ENCODE measurements at regions of chr4 and their contacts with region 1.

Region 1: DNA sequence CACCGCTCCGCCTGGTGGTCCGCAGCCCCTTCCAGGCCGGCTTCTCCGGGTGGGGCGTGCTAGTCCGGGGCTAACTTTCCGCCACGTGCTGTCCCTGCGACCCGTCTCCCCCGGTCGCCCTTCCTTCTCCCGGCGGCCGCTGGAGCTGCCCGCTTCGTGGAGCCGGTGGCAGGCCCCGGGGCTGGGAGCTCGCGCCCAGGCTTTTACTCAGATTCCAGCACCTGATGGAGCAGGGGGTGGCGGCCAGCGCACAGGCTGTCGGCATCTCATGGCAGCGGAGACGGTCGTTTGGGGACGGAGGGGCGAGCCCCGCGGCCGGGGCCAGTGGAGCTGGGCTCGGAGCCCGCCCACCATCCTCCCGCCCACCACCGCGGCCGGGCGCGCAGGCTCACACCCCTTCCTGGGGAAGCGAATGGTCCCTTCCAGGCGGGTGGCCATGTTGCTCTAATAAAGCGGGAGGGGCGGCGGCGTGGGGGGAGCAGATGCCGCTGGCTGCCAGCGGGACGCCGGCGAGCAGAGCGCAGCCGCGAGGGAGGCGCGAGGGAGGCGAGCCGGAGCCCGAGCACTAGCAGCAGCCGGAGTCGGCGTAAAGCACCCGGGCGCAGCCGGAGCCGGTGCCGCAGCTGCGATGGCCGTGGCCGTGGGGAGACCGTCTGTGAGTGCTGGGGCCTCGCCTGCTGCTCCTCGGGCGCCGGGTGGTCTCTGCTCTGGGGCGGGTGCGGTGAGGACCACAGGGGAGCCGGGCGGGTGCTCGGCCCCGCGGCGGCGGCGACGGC is at the start of gene SEPTIN11:
- DNase-seq: peak; percentile 56
- H3K4me3 Mint-ChIP-seq: peak within 1 kb of the TSS; percentile 84
- H3K27ac Mint-ChIP-seq: peak within 1 kb of the TSS; percentile 68
- H3K4me1 Mint-ChIP-seq: peaks cover 14% of the 10 kb centered on the region
- H3K27me3 Mint-ChIP-seq: peaks cover 77% of the 10 kb centered on the region
- total RNA-seq, gene SEPTIN11: 22.4 and 23.6 TPM in 2 replicates

Region 2: GRCh38 chr4:76689241-76689817 is 260.1 kb before region 1 on chr4:
- intact Hi-C with region 1: loop called (anchors 10 kb)
- DNase-seq: no peak
- H3K4me3 Mint-ChIP-seq: peak overlapping the region; percentile 72
- H3K27ac Mint-ChIP-seq: no peak overlapping the region
- H3K4me1 Mint-ChIP-seq: peaks cover 27% of the 10 kb centered on the region
- H3K27me3 Mint-ChIP-seq: peaks cover 74% of the 10 kb centered on the region

Region 3: DNA sequence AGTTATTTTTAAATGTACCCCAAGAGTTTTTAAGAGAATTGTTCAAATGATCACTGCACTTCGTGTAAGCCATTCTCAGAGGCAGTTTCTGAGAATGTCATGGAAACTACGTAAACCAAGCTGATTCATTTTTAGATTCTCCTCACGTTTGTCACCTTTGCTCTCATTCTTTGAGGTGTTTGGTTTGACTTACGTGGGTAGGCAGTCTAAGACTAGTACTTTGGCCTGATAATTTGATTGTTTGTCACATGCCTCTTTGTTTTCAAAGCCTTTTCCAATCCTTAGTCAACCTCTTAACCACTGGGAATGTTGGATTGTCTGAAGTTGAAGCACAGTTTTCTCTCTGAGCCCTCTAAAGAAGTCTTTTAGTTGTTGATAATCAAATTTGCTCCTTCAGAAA is 10.6 kb after region 1 on chr4:
- intact Hi-C with region 1: loop called (anchors 1 kb)
- DNase-seq: no peak
- H3K4me3 Mint-ChIP-seq: no peak overlapping the region
- H3K27ac Mint-ChIP-seq: no peak overlapping the region
- H3K4me1 Mint-ChIP-seq: peaks cover 18% of the 10 kb centered on the region
- H3K27me3 Mint-ChIP-seq: peaks cover 50% of the 10 kb centered on the region

Region 4: DNA sequence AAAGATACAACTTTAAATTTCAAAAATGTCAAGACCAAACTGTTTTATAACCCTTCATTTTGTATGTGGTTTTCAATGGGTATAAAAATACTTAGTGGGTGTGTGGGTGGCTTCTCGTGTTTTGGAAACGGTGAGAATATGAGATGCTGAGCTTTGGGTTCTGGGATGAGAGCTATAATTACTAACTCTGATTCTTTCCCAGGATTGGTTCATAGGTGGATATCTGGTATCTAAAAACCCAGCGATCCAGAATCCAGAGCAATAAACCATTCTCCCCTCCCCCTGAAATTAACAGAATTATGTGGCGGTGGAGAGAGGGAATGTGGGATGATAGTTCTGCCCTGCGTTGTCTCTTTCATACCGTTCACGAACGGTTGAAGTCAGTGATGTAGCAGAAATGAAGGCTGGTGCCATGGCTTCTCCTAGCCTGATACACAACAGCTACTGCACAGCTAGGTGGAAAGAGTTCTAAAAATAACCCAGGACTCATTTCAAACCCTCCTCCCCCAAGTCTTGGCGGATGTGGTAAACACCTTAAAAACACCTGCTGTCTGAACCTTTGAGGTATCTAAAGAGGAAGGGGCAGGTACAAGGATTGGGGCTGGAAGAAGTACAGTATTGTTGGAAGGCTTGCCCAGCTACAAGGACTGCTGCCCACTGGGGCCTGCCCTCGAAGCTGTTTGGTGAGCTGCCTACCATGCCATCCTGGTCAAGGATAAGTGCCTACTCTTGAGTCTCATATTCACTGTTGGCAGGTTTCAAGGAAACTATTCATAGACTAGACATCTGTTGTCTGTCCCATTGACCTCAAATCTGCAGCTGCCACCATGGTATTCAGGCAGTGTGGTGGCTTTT is 44.5 kb after region 1 on chr4:
- intact Hi-C with region 1: loop called (anchors 1 kb)
- DNase-seq: peak; percentile 54
- H3K4me3 Mint-ChIP-seq: peak overlapping the region; percentile 63
- H3K27ac Mint-ChIP-seq: peak overlapping the region; percentile 70
- H3K4me1 Mint-ChIP-seq: peaks cover 48% of the 10 kb centered on the region
- H3K27me3 Mint-ChIP-seq: peaks cover 7% of the 10 kb centered on the region

Region 5: GRCh38 chr4:77028246-77028645 is 78.8 kb after region 1 on chr4:
- intact Hi-C with region 1: loop called (anchors 1 kb)
- DNase-seq: no peak
- H3K4me3 Mint-ChIP-seq: peak overlapping the region; percentile 35
- H3K27ac Mint-ChIP-seq: peak overlapping the region; percentile 71
- H3K4me1 Mint-ChIP-seq: peaks cover 51% of the 10 kb centered on the region
- H3K27me3 Mint-ChIP-seq: peaks cover 4% of the 10 kb centered on the region

Region 6: DNA sequence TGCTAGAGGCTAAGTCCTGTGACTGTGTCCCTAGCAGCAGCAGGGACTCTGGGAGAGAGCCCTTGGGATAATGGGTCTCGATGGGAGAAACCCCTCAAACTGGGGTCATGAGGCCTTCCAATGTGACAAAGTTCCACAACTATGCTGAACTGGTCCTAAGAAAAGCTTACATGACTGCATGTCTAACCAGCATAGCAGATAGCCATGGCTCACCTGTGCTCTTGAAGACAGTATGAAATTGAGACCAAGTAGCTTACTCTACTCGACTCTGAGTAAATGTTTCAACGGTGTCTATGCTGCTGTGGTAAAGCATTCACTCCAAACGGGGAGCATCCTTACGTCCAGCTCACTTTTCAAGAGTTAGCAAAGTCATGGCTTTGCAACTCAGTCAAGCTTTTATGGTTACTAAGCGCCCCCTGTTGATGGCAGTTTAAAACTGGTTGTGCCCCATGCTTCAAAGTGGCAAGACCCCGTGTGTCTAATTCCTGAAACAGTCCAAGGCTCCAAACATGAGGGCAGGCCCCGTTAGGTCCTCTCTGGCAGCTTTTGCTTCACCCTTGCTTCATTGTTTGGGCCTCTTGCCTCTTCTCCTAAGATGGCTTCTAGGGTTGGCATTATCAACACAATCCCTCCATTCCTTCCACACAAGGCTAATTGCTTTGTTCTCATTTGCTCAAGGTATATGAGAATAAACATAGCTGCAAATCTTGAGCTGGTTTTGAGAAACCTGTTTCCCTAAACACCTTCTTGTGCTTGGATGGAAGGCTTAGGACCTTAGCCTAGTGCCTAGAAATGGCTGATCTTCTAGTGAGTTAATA is 254.1 kb after region 1 on chr4:
- intact Hi-C with region 1: loop called (anchors 5 kb)
- DNase-seq: peak; percentile 47
- H3K4me3 Mint-ChIP-seq: no peak overlapping the region
- H3K27ac Mint-ChIP-seq: no peak overlapping the region
- H3K4me1 Mint-ChIP-seq: peaks cover 13% of the 10 kb centered on the region
- H3K27me3 Mint-ChIP-seq: peaks cover 15% of the 10 kb centered on the region